ENCODE measurements at regions of chr1 and their contacts with region 1.

Region 1: DNA sequence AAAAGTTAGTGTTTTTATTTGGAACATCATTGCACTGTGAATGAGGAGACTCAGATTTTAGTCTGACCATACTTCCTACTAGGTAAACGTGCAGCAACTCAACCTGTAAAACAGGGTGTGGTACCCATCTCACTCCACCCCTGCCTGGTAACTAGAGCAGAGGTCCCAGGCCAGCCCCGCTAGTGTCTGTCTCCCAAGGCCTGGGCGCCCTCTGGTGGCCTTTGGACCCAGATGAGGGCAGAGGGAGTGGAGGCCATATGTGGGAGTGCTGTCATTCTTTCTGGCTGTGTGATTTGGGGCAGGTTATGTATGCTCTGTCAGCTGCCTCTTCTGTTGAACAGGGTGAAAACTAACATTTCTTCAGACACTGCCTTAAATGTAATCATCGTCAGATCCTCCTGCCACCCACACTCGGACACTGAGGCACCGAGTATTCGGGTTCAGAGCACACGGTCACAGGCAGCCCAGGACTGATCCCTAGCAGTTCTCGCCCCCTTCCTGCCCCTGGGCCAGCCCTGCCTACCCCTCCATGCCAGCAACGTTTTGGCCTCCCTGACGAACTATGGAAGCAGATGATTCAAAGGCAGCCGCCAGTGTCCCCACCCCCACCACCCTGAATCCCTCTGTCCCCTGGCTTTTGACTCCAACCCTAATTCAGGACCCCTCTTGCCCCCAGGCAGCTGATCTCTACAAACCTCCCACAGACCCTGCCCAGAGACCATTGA is 76.0 kb downstream of the CD247 start:
- DNase-seq: peak; percentile 64
- H3K4me3 ChIP-seq: no peak overlapping the region
- CTCF ChIP-seq: peak; percentile 90

Region 2: GRCh38 chr1:166999090-166999489 is 443.2 kb before region 1 on chr1:
- in situ Hi-C with region 1: no loop called
- DNase-seq: peak; percentile 79
- H3K4me3 ChIP-seq: no peak overlapping the region
- CTCF ChIP-seq: no peak

Region 3: DNA sequence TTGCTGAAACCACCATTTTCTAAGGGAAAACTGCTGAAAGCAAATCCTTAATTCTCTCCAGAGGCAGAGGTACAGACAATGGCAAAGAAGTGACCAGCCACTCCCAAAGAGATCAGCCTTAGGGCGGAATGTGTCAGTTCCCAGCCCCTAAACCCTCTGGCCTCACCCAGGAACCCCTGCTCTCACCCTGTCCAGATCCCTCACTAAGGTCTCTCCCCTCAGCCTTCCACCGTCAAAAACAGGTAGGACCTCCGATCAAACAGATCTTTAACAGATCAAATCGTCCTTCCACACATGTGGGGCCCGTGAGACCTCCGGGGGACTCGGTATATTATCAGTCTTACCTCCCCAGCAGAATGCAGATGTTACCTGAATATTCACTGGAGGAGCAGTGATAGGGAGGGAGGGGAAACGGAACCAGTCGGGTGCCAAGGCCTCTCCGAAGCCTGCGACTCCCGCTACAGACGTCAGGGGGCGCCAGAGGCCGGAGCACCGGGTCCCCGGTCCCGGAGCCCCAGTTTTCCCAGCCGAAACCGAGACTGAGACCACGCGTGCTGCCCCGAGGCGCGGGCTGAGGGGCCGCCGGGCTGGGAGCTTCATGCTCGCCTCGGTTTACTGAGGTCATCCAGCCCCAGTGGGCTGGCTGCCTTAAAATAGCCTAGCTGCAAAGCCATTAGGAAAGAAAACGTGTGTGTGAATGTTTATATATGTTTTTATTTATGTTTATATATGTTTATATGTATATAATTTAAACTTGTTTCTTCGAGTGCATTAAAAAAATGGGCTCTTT is 375.8 kb before region 1 on chr1:
- in situ Hi-C with region 1: loop called (anchors 25 kb)
- DNase-seq: peak; percentile 40
- H3K4me3 ChIP-seq: peak overlapping the region; percentile 29
- CTCF ChIP-seq: peak; percentile 93